A549 (cell line): ENCODE measurements at regions of chr6 and their contacts with region 1.

Region 1: GRCh38 chr6:85911067-85911466 is 268.4 kb upstream of the SYNCRIP start:
- DNase-seq: no peak
- ATAC-seq: no peak
- H3K4me3 ChIP-seq: no peak overlapping the region
- H3K27ac ChIP-seq: no peak overlapping the region
- H3K4me1 ChIP-seq: no peaks in the 10 kb centered on the region
- CTCF ChIP-seq: no peak
- EP300 ChIP-seq: no peak
- POLR2A ChIP-seq: no peak
- RAD21 ChIP-seq: no peak

Region 2: GRCh38 chr6:85892346-85892745 is 18.7 kb before region 1 on chr6:
- CTCF ChIA-PET with region 1: no interaction called
- POLR2A ChIA-PET with region 1: no interaction called
- DNase-seq: no peak
- ATAC-seq: no peak
- H3K4me3 ChIP-seq: no peak overlapping the region
- H3K27ac ChIP-seq: no peak overlapping the region
- H3K4me1 ChIP-seq: no peaks in the 10 kb centered on the region
- CTCF ChIP-seq: no peak
- EP300 ChIP-seq: no peak
- POLR2A ChIP-seq: no peak
- RAD21 ChIP-seq: no peak

Region 3: GRCh38 chr6:85923013-85923430 is 12.0 kb after region 1 on chr6:
- CTCF ChIA-PET with region 1: interaction called, 16 read pairs
- POLR2A ChIA-PET with region 1: no interaction called
- DNase-seq: peak; percentile 2 to 35
- ATAC-seq: peak; percentile 86 to 88
- H3K4me3 ChIP-seq: no peak overlapping the region
- H3K27ac ChIP-seq: no peak overlapping the region
- H3K4me1 ChIP-seq: no peaks in the 10 kb centered on the region
- CTCF ChIP-seq: peak; percentile 60
- EP300 ChIP-seq: no peak
- POLR2A ChIP-seq: no peak
- RAD21 ChIP-seq: peak; percentile 67 to 79